ENCODE measurements at regions of chr5 and their contacts with region 1.

Region 1: GRCh38 chr5:16489322-16489791 is 23.8 kb upstream of the ZNF622 start:
- DNase-seq: peak; percentile 45 to 47
- ATAC-seq: peak; percentile 87 to 93
- H3K4me3 ChIP-seq: no peak overlapping the region
- H3K27ac ChIP-seq: no peak overlapping the region
- H3K4me1 ChIP-seq: 0 out of 3 replicates have a peak, but pooled peaks cover 6% of the 10 kb centered on the region
- CTCF ChIP-seq: peak; percentile 79
- EP300 ChIP-seq: no peak
- POLR2A ChIP-seq: no peak
- RAD21 ChIP-seq: peak; percentile 82 to 87

Region 2: GRCh38 chr5:17204133-17204489 is 714.8 kb after region 1 on chr5:
- CTCF ChIA-PET with region 1: interaction called, 14 read pairs
- POLR2A ChIA-PET with region 1: no interaction called
- DNase-seq: no peak
- ATAC-seq: peak; percentile 54 to 64
- H3K4me3 ChIP-seq: no peak overlapping the region
- H3K27ac ChIP-seq: no peak overlapping the region
- H3K4me1 ChIP-seq: peaks cover 17% of the 10 kb centered on the region
- CTCF ChIP-seq: no peak
- EP300 ChIP-seq: no peak
- POLR2A ChIP-seq: no peak
- RAD21 ChIP-seq: no peak